ENCODE measurements at regions of chr11 and their contacts with region 1.

Region 1: DNA sequence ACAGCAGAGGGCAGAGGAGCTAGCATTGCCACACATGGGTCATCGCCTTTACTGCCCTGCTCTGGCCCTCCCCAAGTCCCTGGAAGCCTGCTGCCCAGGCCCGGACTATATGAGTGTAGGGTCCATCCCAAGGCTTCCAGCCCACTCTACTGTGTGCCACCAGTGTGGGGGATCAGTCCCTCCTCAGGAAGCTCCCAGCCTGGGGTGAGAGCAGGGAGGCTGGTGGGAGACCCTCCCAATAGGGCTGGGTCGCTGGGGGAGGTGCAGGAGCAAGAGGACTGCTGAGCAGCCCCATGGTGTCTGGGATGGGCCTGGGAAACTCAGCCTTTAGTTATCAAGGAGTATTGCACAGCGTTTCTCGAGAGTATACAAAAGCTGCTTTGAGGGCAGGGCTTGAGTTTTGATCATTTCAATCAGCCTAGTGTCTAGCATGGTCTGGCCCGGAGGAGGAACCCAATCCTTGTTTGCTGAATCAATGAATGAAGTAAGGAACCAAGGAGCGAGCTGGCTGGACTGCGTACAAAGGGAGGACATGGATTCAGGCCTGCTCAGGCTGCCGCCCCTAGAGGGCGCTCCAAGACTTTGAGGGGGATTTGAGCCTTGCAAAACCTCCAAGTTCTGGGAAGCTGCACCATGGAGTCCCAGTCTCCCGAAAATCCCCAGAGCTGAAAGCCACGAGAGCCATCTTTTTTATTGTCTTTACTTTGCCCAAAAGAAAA is 89.0 kb upstream of the PARVA start:
- DNase-seq: peak; percentile 90
- H3K4me3 ChIP-seq: no peak overlapping the region; a peak in 2 of 4 replicates
- H3K27ac ChIP-seq: peak overlapping the region; percentile 51 to 100
- H3K4me1 ChIP-seq: peaks cover 25 to 39% of the 10 kb centered on the region in 2 experiments
- H3K27me3 ChIP-seq: no peaks in the 10 kb centered on the region
- CTCF ChIP-seq: peak; percentile 99
- EP300 ChIP-seq: no peak
- RAD21 ChIP-seq: peak; percentile 96

Region 2: GRCh38 chr11:12182676-12183541 is 105.5 kb before region 1 on chr11:
- CTCF ChIA-PET with region 1: no interaction called
- POLR2A ChIA-PET with region 1: no interaction called
- DNase-seq: no peak
- H3K4me3 ChIP-seq: no peak overlapping the region
- H3K27ac ChIP-seq: peak overlapping the region; percentile 58 to 99
- H3K4me1 ChIP-seq: peaks cover 12 to 51% of the 10 kb centered on the region in 2 experiments
- H3K27me3 ChIP-seq: no peaks in the 10 kb centered on the region
- CTCF ChIP-seq: no peak
- EP300 ChIP-seq: peak; percentile 10 to 98; a peak in 2 of 4 replicates
- RAD21 ChIP-seq: no peak

Region 3: DNA sequence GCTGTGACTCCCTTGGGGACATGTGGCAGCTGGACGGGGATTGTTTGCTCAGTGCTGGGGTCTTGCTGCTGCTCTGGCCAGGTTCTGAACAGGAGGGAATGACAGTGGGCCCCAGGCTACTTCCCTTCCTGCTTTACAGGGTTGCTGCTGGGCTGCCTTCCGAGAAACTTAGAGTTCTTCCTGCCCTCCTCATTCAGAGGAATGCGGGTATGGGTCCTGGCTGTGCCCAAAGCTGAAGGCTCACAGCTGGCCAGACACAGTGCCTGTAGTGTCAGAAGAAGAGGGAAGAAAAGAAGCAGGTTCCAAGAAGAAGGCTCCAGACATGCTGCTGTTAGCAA is 19.3 kb before region 1 on chr11:
- CTCF ChIA-PET with region 1: interaction called, 57 read pairs
- POLR2A ChIA-PET with region 1: no interaction called
- DNase-seq: peak; percentile 67
- H3K4me3 ChIP-seq: no peak overlapping the region
- H3K27ac ChIP-seq: peak overlapping the region; percentile 2 to 74
- H3K4me1 ChIP-seq: peaks cover 11 to 24% of the 10 kb centered on the region in 2 experiments; a peak in 3 of 4 replicates
- H3K27me3 ChIP-seq: no peaks in the 10 kb centered on the region
- CTCF ChIP-seq: no peak
- EP300 ChIP-seq: no peak
- RAD21 ChIP-seq: no peak

Region 4: DNA sequence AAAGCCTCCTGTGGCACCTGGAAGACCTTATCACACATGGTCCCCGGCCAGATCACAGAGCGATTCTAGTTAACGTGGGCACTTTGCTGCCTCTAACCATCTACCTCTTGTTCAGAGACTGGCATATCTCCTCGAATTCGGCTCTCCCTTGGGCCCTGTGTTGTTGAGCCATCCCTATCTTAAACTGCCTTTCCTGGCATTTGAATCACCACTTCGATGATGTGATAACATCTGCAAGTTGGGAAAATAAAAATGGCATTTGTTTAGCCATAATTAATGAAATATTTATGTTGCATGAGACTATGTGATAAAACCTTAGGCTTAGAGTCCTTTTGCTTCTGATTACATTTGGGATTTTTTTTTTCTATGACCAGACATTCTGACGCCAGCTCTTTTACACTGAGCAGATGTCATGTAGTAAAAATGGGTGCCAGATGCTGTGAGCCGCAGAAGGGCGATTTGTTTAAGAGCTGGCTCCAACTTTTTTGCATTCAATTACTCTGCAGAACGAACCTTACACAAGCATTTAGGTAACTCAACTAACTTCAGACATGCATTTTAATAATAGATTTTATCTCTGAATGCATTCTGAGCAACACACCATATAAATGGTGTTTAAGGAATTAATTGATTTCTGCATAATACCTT is 30.5 kb after region 1 on chr11:
- CTCF ChIA-PET with region 1: interaction called, 74 read pairs
- POLR2A ChIA-PET with region 1: no interaction called
- DNase-seq: peak; percentile 59
- H3K4me3 ChIP-seq: no peak overlapping the region
- H3K27ac ChIP-seq: peak overlapping the region; percentile 79 to 96
- H3K4me1 ChIP-seq: peaks cover 13 to 30% of the 10 kb centered on the region in 2 experiments; a peak in 3 of 4 replicates
- H3K27me3 ChIP-seq: no peaks in the 10 kb centered on the region
- CTCF ChIP-seq: no peak
- EP300 ChIP-seq: peak; percentile 88 to 92
- RAD21 ChIP-seq: 0 out of 2 replicates have a peak, but pooled peaks have one; percentile 14

Region 5: DNA sequence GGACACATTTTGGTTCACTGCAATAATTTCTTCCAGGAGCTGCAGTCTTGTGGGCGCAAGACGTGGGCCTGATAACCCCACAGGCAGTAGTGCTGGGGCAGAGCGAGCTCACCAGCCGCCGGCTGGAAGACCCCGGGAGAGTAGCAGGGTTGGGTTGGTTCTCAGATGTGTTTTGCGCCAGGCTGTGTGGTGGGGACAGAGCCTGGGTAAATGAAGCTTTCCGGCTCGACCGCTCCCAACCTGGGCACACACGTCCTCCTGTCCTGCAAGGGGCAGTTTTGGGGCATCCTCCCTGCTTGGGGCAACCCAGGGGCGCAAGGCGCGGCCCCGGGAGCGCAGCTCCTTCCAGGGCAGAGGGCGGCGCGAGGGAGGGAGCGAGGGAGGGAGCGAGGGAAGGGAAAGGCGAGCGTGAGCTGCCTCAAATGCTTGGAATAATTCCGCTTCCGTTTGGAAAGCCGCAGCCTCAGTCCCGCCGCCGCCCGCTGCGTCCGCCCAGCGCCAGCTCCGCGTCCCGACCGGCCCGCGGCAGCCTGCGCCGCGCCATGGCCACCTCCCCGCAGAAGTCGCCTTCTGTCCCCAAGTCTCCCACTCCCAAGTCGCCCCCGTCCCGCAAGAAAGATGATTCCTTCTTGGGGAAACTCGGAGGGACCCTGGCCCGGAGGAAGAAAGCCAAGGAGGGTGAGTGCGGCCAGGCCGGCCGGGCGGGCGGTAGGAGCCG is 88.9 kb after region 1 on chr11 and contains the start of gene PARVA:
- CTCF ChIA-PET with region 1: interaction called, 14 read pairs
- POLR2A ChIA-PET with region 1: no interaction called
- DNase-seq: no peak
- H3K4me3 ChIP-seq: peak within 1 kb of the TSS; percentile 64 to 85
- H3K27ac ChIP-seq: peak within 1 kb of the TSS; percentile 84 to 90
- H3K4me1 ChIP-seq: peaks cover 0 to 15% of the 10 kb centered on the region in 2 experiments; a peak in 3 of 4 replicates
- H3K27me3 ChIP-seq: no peaks in the 10 kb centered on the region
- CTCF ChIP-seq: no peak
- EP300 ChIP-seq: no peak
- RAD21 ChIP-seq: no peak
- polyA plus RNA-seq, gene PARVA: 27.6 and 31.6 TPM in 2 replicates

Region 6: GRCh38 chr11:12411806-12412727 is 123.7 kb after region 1 on chr11:
- CTCF ChIA-PET with region 1: interaction called, 10 read pairs
- POLR2A ChIA-PET with region 1: no interaction called
- DNase-seq: peak; percentile 81
- H3K4me3 ChIP-seq: peak overlapping the region in 1 of 2 experiments; percentile 36; a peak in 2 of 4 replicates
- H3K27ac ChIP-seq: peak overlapping the region; percentile 88 to 99
- H3K4me1 ChIP-seq: peaks cover 35 to 38% of the 10 kb centered on the region in 2 experiments
- H3K27me3 ChIP-seq: no peaks in the 10 kb centered on the region
- CTCF ChIP-seq: peak; percentile 91
- EP300 ChIP-seq: peak in 1 of 2 experiments; percentile 80; a peak in 1 of 4 replicates
- RAD21 ChIP-seq: peak; percentile 93

Region 7: DNA sequence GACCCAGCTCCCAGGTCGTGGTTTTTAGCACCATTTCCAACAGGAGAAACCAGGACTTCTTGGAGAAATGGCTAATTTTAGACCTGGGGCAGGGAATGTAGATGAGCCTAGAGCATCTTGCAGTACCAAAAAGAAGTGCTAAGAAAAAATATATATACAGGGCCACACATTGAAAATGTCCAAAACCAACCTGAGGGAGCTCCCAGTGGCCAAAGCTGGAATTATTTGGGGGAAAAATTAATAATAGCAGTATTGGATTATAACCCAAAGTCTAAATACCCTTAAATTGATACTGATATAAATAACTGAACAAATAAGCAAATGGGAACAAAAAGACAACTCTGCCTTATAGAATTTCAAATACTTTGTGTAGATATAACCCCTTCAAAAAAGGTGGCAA is 197.0 kb after region 1 on chr11:
- CTCF ChIA-PET with region 1: no interaction called
- POLR2A ChIA-PET with region 1: no interaction called
- DNase-seq: no peak
- H3K4me3 ChIP-seq: no peak overlapping the region
- H3K27ac ChIP-seq: no peak overlapping the region
- H3K4me1 ChIP-seq: peaks cover 0 to 5% of the 10 kb centered on the region in 2 experiments; a peak in 1 of 4 replicates
- H3K27me3 ChIP-seq: no peaks in the 10 kb centered on the region
- CTCF ChIP-seq: peak; percentile 60
- EP300 ChIP-seq: no peak
- RAD21 ChIP-seq: peak; percentile 44; the same call in 1 of the 2 replicates

Region 8: GRCh38 chr11:12900496-12900895 is 612.1 kb after region 1 on chr11:
- CTCF ChIA-PET with region 1: interaction called, 11 read pairs
- POLR2A ChIA-PET with region 1: interaction called, 3 read pairs
- DNase-seq: no peak
- H3K4me3 ChIP-seq: no peak overlapping the region
- H3K27ac ChIP-seq: peak overlapping the region; percentile 54 to 65; a peak in 3 of 4 replicates
- H3K4me1 ChIP-seq: peaks cover 8 to 12% of the 10 kb centered on the region in 2 experiments; a peak in 3 of 4 replicates
- H3K27me3 ChIP-seq: no peaks in the 10 kb centered on the region
- CTCF ChIP-seq: no peak
- EP300 ChIP-seq: peak in 1 of 2 experiments; percentile 42; a peak in 1 of 4 replicates
- RAD21 ChIP-seq: no peak

Region 9: DNA sequence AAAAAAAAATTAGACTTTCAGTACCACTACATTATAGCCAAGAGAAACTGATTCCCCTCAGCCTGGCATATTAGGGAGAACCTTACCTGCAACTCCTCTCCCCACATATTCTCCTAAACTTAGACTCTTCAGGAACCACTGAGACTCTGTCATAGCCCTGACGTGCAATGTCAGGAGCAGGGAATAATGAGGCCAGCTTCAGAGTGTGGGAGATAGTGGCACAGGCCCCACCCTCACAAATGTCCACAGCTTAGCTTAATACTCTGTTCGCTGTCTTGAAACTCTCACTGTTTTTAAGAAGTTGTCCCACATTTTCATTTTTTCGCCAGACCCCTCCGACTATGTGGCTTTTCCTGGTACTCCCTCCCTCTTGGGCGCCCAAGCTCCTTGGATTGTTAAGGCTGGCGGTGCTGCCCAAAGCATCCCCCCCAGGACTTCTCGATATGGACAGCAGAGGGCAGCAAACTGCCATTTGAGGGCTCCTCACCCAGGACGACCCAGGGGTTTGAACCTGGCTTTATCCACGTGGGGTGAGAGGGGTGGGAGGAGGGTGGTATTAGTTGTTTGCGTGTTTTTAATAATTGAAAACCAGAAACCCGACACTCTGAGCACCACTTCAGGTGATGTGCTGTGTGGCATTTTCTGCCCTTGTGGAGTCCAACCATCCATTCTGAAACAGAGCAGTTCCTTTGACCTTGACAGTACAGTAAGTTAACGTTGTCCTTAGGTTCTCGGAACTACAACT is 675.6 kb after region 1 on chr11:
- CTCF ChIA-PET with region 1: interaction called, 62 read pairs
- POLR2A ChIA-PET with region 1: no interaction called
- DNase-seq: peak; percentile 88
- H3K4me3 ChIP-seq: no peak overlapping the region
- H3K27ac ChIP-seq: no peak overlapping the region
- H3K4me1 ChIP-seq: no peaks in the 10 kb centered on the region; a peak in 1 of 4 replicates
- H3K27me3 ChIP-seq: no peaks in the 10 kb centered on the region
- CTCF ChIP-seq: peak; percentile 93
- EP300 ChIP-seq: no peak
- RAD21 ChIP-seq: peak; percentile 91